Ascending aorta (tissue), 2 donors: ENCODE measurements at regions of chr18 and their contacts with region 1.

Region 1: GRCh38 chr18:21242141-21242779 is at the start of gene GREB1L:
- DNase-seq: peak in 1 of 2 donors; percentile 71
- H3K4me3 ChIP-seq: peak within 1 kb of the TSS; percentile 73 to 87
- H3K27ac ChIP-seq: peak within 1 kb of the TSS; percentile 68 to 72
- H3K4me1 ChIP-seq: peaks cover 0 to 3% of the 10 kb centered on the region in 2 donors
- H3K27me3 ChIP-seq: no peaks in the 10 kb centered on the region
- CTCF ChIP-seq: peak in 2 of 3 experiments; percentile 20 to 23
- total RNA-seq, gene GREB1L: 2.2 TPM

Region 2: DNA sequence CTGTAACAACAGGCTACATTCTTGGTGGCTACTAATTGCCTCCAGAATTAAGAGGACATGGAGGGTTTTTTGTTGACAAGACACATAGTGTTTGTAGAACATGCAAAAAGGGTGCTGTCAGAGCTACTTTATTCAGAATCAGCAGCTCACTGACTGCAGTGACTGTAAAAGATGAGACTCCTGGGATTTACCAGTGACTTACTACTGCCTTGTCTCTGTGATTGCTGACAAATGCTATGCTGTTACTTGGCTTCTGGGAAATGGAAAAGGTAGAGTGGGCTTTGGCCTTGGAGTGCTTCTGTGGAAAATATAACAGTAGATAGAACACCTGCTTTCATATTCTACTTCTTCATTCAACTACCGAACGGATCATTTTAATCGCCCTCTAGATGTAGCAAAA is 47.6 kb after region 1 on chr18:
- intact Hi-C with region 1: loop called (anchors 5 kb)
- DNase-seq: no peak
- H3K4me3 ChIP-seq: no peak overlapping the region
- H3K27ac ChIP-seq: no peak overlapping the region
- H3K4me1 ChIP-seq: peaks cover 0 to 22% of the 10 kb centered on the region in 2 donors
- H3K27me3 ChIP-seq: no peaks in the 10 kb centered on the region
- CTCF ChIP-seq: no peak

Region 3: DNA sequence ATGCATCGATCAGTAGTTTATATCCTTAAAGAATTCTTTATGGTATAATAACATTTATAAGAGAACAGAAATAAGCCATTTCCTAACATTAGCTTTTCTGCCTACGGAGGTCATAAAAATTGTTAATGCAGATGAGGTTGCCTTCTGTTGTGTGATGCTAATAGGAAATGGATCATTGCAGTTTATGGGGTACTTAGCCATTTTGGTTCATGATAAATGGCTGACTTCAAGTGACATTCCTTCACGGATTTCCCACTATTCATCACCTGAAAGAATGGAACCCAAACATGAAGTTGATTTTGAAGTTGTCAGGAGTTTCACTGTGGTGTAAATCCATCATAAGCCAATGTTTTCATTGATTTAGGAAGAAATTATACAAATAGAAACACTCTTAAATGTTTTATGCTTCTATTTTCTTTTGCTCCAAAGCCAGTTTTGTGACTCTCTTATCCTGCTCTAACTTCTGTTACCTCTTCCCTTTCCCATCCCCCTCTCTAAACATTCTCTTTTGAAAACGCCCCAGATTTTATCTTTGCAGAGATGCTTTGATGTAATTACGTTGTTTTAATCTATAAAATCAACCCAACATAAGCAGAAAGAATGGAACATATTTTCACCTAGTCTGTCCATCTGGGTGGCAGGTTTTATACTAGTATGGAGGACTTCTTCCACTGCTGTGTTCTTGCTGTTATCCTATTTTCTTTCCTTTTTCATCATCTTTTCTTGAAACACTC is 57.9 kb after region 1 on chr18:
- intact Hi-C with region 1: no loop called
- DNase-seq: no peak
- H3K4me3 ChIP-seq: no peak overlapping the region
- H3K27ac ChIP-seq: no peak overlapping the region
- H3K4me1 ChIP-seq: no peaks in the 10 kb centered on the region
- H3K27me3 ChIP-seq: no peaks in the 10 kb centered on the region
- CTCF ChIP-seq: no peak

Region 4: GRCh38 chr18:21369146-21369545 is 126.9 kb after region 1 on chr18:
- intact Hi-C with region 1: loop called (anchors 5 kb)
- DNase-seq: no peak
- H3K4me3 ChIP-seq: no peak overlapping the region
- H3K27ac ChIP-seq: no peak overlapping the region
- H3K4me1 ChIP-seq: peaks cover 0 to 4% of the 10 kb centered on the region in 2 donors
- H3K27me3 ChIP-seq: no peaks in the 10 kb centered on the region
- CTCF ChIP-seq: no peak

Region 5: GRCh38 chr18:21444465-21445023 is 202.3 kb after region 1 on chr18:
- intact Hi-C with region 1: loop called (anchors 2 kb)
- DNase-seq: no peak
- H3K4me3 ChIP-seq: no peak overlapping the region
- H3K27ac ChIP-seq: no peak overlapping the region
- H3K4me1 ChIP-seq: no peaks in the 10 kb centered on the region
- H3K27me3 ChIP-seq: no peaks in the 10 kb centered on the region
- CTCF ChIP-seq: peak; percentile 37 to 73 (median 56)